CD4-positive, alpha-beta T cell (primary cell): ENCODE measurements at regions of chr16 and their contacts with region 1.

Region 1: DNA sequence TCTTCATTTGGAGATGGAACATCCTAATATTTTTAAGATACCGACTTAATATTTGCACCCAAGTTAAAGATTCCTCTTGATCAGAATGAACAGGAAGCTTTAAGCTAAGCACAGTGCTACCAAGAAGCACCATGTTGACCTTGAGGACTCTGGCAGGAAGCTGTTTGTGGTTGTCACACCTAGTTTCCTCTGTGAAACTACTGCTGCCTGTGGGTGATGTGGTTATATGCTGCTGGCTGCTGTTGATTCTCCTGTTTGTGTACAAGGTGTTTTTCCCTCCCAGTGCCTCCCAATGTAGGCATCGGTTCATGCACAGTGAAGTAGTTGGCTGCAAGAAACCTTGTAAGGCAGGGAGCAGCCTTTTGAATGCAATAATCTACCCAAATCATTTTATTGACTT is 23.4 kb downstream of the RBL2 start:
- DNase-seq: peak; percentile 49 to 94 (median 66)
- ATAC-seq: peak; percentile 74
- H3K4me3 ChIP-seq: peak overlapping the region; percentile 32
- H3K4me3 Mint-ChIP-seq: peak overlapping the region; percentile 74
- H3K27ac ChIP-seq: peak overlapping the region; percentile 53 to 60
- H3K27ac Mint-ChIP-seq: peak overlapping the region; percentile 94
- H3K4me1 ChIP-seq: peaks cover 67% of the 10 kb centered on the region
- H3K4me1 Mint-ChIP-seq: peaks cover 97% of the 10 kb centered on the region
- H3K27me3 ChIP-seq: no peaks in the 10 kb centered on the region
- H3K27me3 Mint-ChIP-seq: no peaks in the 10 kb centered on the region
- CTCF ChIP-seq: no peak

Region 2: DNA sequence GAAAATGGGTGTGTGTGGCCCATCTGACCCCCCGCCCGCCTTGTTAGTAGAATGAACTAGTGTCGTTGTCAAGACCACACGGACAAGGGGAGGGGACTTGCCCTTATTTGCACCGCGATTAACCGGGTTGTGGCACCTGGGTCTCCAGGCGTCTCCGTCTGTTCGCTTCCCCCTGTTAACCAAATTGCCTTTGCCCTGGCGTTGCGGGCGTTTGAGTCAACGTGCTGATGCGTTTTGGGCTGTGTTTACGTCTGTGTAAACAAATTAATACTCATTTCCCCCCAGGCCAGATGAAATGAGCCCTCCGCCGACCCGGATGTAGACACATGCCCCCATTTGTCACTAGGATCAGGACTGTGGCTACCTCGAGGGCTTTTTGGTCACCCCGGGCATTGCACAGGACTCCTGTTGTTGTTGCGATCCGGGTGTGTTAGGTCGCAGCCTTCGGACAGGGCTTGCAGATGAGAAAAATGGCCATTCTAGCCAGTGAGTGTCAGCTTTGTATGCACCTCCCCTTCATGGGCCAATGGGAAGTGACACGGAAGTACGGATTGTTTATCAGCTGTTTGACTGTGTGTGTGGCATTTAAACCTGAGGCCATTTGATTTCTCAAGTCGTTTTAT is 22.5 kb before region 1 on chr16:
- CTCF ChIA-PET with region 1: interaction called, 13 read pairs
- POLR2A ChIA-PET with region 1: interaction called, 436 read pairs
- intact Hi-C with region 1: loop called (anchors 1 to 2 kb)
- DNase-seq: peak; percentile 36 to 86 (median 55)
- ATAC-seq: peak; percentile 64
- H3K4me3 ChIP-seq: peak overlapping the region; percentile 86
- H3K4me3 Mint-ChIP-seq: peak overlapping the region; percentile 96
- H3K27ac ChIP-seq: peak overlapping the region; percentile 88 to 98
- H3K27ac Mint-ChIP-seq: peak overlapping the region; percentile 96
- H3K4me1 ChIP-seq: peaks cover 26% of the 10 kb centered on the region
- H3K4me1 Mint-ChIP-seq: peaks cover 53% of the 10 kb centered on the region
- H3K27me3 ChIP-seq: no peaks in the 10 kb centered on the region
- H3K27me3 Mint-ChIP-seq: no peaks in the 10 kb centered on the region
- CTCF ChIP-seq: no peak

Region 3: DNA sequence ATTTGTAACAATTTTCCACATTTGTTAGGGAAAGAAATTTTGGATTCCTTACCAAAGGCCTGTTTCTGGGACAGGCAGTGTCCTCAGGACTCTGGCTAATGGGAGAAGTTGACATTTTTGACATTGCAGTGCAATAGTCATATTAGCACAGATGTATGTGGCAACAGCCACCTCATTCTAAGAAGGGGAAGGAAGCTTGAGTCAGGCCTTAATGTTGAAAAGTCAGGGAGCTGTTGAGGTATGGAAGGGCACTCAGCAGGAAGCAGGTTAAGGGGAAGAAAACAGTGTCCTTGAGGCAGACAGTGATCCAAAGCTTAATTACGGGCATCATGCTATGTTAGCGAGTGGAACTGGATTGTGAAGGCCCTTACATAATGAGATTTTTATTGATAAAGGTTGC is 24.5 kb after region 1 on chr16:
- CTCF ChIA-PET with region 1: no interaction called
- POLR2A ChIA-PET with region 1: interaction called, 39 read pairs
- intact Hi-C with region 1: loop called in 1 of 2 experiments (anchors 2 kb)
- DNase-seq: peak in 2 of 14 experiments; percentile 32 to 45
- ATAC-seq: no peak
- H3K4me3 ChIP-seq: no peak overlapping the region
- H3K4me3 Mint-ChIP-seq: no peak overlapping the region
- H3K27ac ChIP-seq: no peak overlapping the region
- H3K27ac Mint-ChIP-seq: peak overlapping the region; percentile 74
- H3K4me1 ChIP-seq: peaks cover 7% of the 10 kb centered on the region
- H3K4me1 Mint-ChIP-seq: peaks cover 62% of the 10 kb centered on the region
- H3K27me3 ChIP-seq: no peaks in the 10 kb centered on the region
- H3K27me3 Mint-ChIP-seq: no peaks in the 10 kb centered on the region
- CTCF ChIP-seq: no peak

Region 4: DNA sequence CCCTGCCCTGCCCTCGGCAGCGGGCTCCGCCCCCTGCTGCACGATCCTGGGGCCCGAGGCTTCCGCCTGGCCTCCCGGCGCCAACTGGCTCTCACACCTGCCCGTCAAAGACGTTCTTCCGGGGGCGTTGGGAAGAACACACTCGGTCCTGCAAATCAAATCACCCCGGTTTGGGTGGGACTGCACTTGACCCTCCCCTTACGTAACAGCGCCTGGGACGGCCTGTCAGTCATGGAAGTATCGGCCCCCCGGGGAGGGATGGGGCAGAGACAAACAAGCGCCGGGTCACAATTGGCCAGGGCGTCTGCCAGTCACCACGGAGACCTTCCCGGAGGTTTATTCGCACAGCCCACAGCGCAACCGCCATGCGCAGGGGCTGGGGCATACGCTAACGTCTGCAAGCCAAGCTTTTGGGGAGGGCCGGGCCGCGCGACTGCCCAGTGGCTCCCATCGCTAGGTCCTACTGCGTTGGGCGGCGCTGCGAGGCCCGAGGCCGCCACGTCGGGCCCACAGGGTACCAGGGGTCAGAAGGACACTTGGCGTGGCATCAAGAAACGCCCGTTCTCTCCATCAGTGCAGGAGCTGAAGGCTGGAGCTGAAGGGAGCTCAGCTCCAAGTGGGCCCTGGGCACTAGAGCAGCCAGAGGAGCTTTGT is 45.7 kb after region 1 on chr16:
- CTCF ChIA-PET with region 1: no interaction called
- POLR2A ChIA-PET with region 1: interaction called, 94 read pairs
- intact Hi-C with region 1: loop called (anchors 1 to 5 kb)
- DNase-seq: peak; percentile 97 to 100 (median 100)
- ATAC-seq: peak; percentile 88
- H3K4me3 ChIP-seq: peak overlapping the region; percentile 76
- H3K4me3 Mint-ChIP-seq: peak overlapping the region; percentile 93
- H3K27ac ChIP-seq: peak overlapping the region; percentile 76 to 84
- H3K27ac Mint-ChIP-seq: peak overlapping the region; percentile 86
- H3K4me1 ChIP-seq: peaks cover 44% of the 10 kb centered on the region
- H3K4me1 Mint-ChIP-seq: peaks cover 65% of the 10 kb centered on the region
- H3K27me3 ChIP-seq: no peaks in the 10 kb centered on the region
- H3K27me3 Mint-ChIP-seq: no peaks in the 10 kb centered on the region
- CTCF ChIP-seq: no peak

Region 5: GRCh38 chr16:53703590-53704444 is 246.1 kb after region 1 on chr16 and contains the starts of genes FTO and RPGRIP1L:
- CTCF ChIA-PET with region 1: no interaction called
- POLR2A ChIA-PET with region 1: no interaction called
- intact Hi-C with region 1: loop called in 1 of 2 experiments (anchors 10 kb)
- DNase-seq: peak; percentile 90 to 99 (median 93)
- ATAC-seq: peak; percentile 89
- H3K4me3 ChIP-seq: peak within 1 kb of the TSS; percentile 87
- H3K4me3 Mint-ChIP-seq: peak within 1 kb of the TSS; percentile 97
- H3K27ac ChIP-seq: peak within 1 kb of the TSS; percentile 53 to 63
- H3K27ac Mint-ChIP-seq: peak within 1 kb of the TSS; percentile 86
- H3K4me1 ChIP-seq: peaks cover 14% of the 10 kb centered on the region
- H3K4me1 Mint-ChIP-seq: peaks cover 37% of the 10 kb centered on the region
- H3K27me3 ChIP-seq: no peaks in the 10 kb centered on the region
- H3K27me3 Mint-ChIP-seq: no peaks in the 10 kb centered on the region
- CTCF ChIP-seq: no peak
- total RNA-seq, gene FTO: 36.3 to 37.9 TPM
- total RNA-seq, gene RPGRIP1L: 2.4 to 2.5 TPM

Region 6: GRCh38 chr16:54722210-54722676 is 1264.6 kb after region 1 on chr16:
- CTCF ChIA-PET with region 1: no interaction called
- POLR2A ChIA-PET with region 1: no interaction called
- intact Hi-C with region 1: no loop called
- DNase-seq: no peak
- ATAC-seq: no peak
- H3K4me3 ChIP-seq: no peak overlapping the region
- H3K4me3 Mint-ChIP-seq: no peak overlapping the region
- H3K27ac ChIP-seq: no peak overlapping the region
- H3K27ac Mint-ChIP-seq: no peak overlapping the region
- H3K4me1 ChIP-seq: no peaks in the 10 kb centered on the region
- H3K4me1 Mint-ChIP-seq: no peaks in the 10 kb centered on the region
- H3K27me3 ChIP-seq: no peaks in the 10 kb centered on the region
- H3K27me3 Mint-ChIP-seq: no peaks in the 10 kb centered on the region
- CTCF ChIP-seq: no peak